MCF 10A (cell line): ENCODE measurements at regions of chr14 and their contacts with region 1.

Region 1: DNA sequence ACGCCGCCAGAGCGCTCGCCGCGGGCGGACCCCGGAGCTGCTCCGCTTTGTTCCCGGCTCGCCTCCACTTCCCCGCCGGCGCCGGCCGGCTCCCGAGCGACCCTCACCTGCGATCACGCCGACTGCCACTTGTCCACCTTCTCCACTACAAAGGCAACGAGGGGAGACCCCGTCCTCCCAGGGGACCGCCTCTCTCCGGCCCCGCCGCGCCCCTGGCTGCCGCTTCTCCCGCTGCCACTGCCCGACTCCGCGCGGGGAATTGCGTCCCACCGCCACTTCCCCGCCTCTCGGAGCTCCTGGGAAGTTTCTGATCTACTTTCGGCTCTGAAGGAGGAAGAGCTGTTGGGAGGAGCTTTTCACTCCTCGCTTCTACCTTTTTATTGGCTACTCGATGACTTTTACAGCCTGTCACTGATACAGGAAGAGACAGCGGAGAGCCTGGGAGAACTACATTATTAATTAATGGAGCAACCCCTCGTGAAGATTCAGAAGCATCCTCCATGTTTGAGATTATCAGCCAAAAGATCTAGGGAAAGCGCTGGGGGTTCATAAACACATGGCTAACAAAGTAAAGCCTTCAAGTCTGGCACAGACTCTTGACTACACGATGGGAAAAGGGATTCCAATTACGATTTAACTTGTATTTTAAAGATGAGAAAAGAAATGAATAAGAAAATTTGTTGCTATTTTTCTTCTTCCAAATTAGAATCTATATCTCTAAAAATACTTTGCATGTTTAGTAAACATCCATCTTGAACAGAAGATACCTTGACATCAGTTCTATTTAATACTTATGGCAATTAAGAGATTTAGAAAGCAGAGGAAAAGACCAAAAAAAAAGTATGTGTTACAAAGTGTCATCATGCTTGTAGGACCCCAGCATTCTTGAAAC is at the start of gene BAZ1A:
- DNase-seq: peak; percentile 94
- H3K4me3 Mint-ChIP-seq: peak within 1 kb of the TSS; percentile 93
- H3K27ac Mint-ChIP-seq: peak within 1 kb of the TSS; percentile 99
- H3K4me1 Mint-ChIP-seq: peaks cover 8% of the 10 kb centered on the region
- H3K27me3 Mint-ChIP-seq: no peaks in the 10 kb centered on the region
- CTCF ChIP-seq: no peak
- total RNA-seq, gene BAZ1A: 33.3 and 44.6 TPM in 2 replicates

Region 2: DNA sequence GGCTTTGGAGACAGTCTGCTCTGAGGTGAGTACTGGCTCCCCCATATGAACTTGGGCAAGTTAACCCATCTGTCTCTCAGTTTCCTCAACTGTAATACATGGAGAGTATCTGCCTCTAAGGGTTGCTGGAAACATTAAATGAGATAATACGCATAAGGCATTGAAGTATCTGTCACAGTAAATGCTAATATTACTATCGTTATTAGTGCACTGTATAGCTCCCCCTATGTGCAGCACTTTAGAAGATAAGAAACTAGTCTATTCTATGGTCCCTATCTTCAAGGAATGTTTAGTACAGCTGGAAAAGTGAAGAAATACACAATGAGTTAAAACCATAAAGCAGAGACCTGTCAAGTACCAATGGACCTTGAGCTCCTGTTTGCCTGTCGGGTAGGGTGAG is 109.2 kb before region 1 on chr14:
- CTCF ChIA-PET with region 1: interaction called, 3 read pairs
- POLR2A ChIA-PET with region 1: interaction called, 4 read pairs
- intact Hi-C with region 1: loop called (anchors 10 kb)
- DNase-seq: no peak
- H3K4me3 Mint-ChIP-seq: no peak overlapping the region
- H3K27ac Mint-ChIP-seq: no peak overlapping the region
- H3K4me1 Mint-ChIP-seq: no peaks in the 10 kb centered on the region
- H3K27me3 Mint-ChIP-seq: no peaks in the 10 kb centered on the region
- CTCF ChIP-seq: no peak

Region 3: DNA sequence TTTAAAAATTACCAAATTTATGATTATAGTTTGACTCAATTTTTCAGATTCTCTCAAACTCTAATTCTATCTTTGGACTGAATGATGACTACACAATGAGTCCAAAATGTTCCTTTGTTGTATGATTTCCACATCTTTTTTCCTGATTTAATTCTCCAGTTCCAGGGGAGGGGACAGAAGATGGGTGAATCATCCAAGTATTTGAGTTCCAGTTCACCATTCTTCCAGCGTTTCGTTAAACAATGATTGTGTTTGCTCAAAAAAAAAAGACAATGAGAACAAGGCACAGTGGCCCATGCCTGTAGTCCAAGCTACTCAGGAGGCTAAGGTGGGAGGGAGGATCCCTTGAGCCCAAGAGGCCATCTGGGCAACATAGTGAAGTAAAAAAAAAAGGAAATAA is 23.9 kb before region 1 on chr14:
- CTCF ChIA-PET with region 1: interaction called, 3 read pairs
- POLR2A ChIA-PET with region 1: interaction called, 15 read pairs
- intact Hi-C with region 1: no loop called
- DNase-seq: peak; percentile 87
- H3K4me3 Mint-ChIP-seq: peak overlapping the region; percentile 7
- H3K27ac Mint-ChIP-seq: peak overlapping the region; percentile 75
- H3K4me1 Mint-ChIP-seq: no peaks in the 10 kb centered on the region
- H3K27me3 Mint-ChIP-seq: no peaks in the 10 kb centered on the region
- CTCF ChIP-seq: no peak

Region 4: DNA sequence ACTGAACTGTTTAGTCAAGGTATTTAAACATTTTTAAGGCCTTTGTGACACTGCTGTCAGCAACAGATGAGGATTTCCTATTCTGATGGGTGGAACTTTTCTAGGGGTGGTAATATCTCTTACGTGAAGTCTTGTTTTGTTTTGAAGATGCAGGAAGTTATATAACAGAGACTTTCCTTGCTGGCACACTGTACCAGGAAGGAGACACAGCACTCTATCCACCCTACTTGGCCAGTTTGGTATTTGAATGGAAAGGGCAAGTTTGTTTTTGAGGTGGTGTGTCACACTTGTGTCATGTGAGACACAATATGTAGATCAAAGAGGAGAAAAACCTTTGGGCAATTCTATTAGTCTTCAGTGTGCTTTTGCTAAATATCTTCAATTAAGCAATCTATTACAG is 55.9 kb after region 1 on chr14:
- CTCF ChIA-PET with region 1: no interaction called
- POLR2A ChIA-PET with region 1: no interaction called
- intact Hi-C with region 1: no loop called
- DNase-seq: no peak
- H3K4me3 Mint-ChIP-seq: no peak overlapping the region
- H3K27ac Mint-ChIP-seq: no peak overlapping the region
- H3K4me1 Mint-ChIP-seq: peaks cover 5% of the 10 kb centered on the region
- H3K27me3 Mint-ChIP-seq: no peaks in the 10 kb centered on the region
- CTCF ChIP-seq: no peak

Region 5: DNA sequence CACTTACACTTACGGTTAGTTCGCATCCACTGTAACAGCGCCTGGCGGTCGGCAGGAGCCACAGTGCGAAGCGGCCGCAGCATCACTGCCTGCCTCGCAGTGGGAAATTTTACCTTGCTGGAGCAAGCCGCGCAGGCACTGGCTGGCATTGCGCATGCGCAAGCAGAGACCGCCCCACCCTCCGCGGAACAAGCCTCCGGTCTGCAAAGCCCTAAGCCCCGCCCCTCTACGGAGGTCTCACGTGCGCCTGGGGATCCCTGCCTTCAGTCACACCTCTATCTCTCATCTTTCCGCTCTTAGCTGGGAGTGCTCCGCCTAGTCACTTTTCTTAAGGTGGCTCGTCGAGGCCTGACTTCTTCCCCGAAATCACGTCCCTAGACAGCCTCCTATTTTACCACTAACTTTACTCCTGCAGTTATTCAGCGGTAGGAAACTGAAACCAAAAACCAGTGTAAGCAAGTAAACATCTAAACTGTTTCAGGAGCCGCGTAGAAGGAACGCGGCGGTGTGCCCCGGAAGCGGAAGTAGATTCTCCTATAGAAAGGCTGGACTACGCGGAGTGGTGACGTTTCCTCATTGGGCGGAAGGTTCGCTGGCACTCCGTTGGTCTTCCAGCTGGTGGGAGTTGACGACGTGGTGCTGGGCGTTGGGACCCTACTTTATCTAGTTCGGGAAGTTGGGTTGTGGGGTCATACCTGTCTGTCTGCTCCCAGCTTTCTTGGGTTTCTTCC is 107.3 kb after region 1 on chr14 and contains the start of gene SRP54:
- CTCF ChIA-PET with region 1: interaction called, 17 read pairs
- POLR2A ChIA-PET with region 1: interaction called, 266 read pairs
- intact Hi-C with region 1: loop called (anchors 1 kb)
- DNase-seq: peak; percentile 98
- H3K4me3 Mint-ChIP-seq: no peak within 1 kb of the TSS
- H3K27ac Mint-ChIP-seq: no peak within 1 kb of the TSS
- H3K4me1 Mint-ChIP-seq: peaks cover 5% of the 10 kb centered on the region
- H3K27me3 Mint-ChIP-seq: no peaks in the 10 kb centered on the region
- CTCF ChIP-seq: no peak
- total RNA-seq, gene SRP54: 77.4 and 108 TPM in 2 replicates